Activated CD4-positive, alpha-beta T cell treated with anti-CD3 and anti-CD28 coated beads for 36 hours (primary cell): ENCODE measurements at regions of chr12 and their contacts with region 1.

Region 1: DNA sequence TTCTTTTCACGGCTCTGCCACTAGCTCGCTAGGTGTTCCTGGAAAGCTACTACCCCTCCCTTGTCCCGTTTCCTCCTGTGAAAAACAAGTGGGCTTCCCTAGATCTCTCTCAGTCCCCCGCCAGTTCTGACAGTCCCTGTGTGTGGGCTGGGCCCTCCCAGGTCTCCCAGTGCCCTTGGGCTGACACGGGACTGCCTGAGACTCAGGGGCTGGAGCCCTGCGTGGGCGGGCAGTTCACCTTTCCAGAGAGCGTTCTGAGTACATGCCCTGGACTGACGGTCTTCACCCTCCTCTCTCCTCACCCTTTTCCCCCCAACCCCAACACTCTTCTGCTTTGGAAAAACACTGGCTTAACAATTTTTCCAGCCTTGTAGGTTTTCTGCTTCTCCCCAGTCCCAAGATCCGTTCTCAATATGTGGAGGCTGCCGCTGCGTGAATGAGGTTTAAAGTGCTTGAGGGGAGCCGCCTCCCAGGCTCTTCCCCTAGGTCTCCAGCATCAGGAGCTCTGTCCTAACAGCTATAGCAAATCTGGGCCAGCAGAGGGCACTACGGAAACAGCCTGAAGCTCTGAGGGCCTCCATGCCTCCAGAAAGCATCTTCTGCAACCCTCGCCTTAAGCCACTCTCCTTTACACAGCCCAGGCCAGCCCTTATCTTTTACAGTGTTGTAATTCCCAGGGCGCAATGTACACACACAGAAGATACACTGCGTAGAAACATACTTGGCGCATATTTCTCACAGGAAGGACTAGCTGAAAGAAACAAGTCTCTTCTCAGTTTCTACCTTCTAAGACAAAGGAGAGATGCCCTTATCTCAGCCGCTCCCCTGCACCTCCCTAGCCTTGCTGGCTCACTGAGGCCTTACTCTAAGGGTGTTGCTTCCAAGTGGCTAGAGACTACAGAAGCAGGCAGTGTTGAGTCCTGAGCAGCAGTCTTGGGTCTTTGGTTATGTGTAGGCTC is 10.4 kb upstream of the DCD start:
- DNase-seq: peak; percentile 73
- ATAC-seq: peak; percentile 78
- H3K4me3 Mint-ChIP-seq: no peak overlapping the region
- H3K27ac Mint-ChIP-seq: no peak overlapping the region
- H3K4me1 Mint-ChIP-seq: no peaks in the 10 kb centered on the region
- H3K27me3 Mint-ChIP-seq: peaks cover 16% of the 10 kb centered on the region

Region 2: DNA sequence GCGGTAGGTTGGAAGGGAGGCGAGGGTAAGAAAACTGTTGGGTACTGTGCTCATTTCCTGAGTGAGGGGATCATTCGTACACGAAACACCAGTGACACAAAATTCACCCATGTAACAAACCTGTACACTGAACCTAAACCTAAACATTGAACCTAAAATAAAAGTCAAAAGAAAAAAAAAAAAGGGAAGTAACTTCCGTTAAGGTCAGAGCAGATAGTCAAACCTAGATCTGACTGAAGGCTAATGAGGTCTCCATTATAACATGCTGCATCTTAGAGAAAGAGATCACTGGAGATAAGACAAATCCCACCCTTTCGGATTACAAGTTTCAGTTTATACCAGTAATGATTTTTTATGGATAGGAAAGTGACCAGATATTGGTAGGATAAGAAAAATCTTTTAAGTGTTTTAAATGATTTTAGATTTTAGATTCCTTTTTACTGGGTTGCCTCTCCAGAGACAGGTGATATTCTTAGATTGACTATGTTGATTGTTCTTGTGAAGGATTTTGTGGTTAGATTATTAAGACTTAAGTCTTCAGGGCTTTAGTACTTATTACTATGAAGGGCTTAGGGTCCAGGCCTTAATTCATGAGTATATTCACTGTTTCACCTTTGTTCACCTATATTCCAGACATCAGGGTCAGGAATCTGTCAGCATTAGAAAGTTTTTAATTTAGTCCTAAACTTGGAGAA is 172.3 kb before region 1 on chr12:
- CTCF ChIA-PET with region 1: no interaction called
- POLR2A ChIA-PET with region 1: no interaction called
- intact Hi-C with region 1: no loop called
- DNase-seq: no peak
- ATAC-seq: no peak
- H3K4me3 Mint-ChIP-seq: no peak overlapping the region
- H3K27ac Mint-ChIP-seq: no peak overlapping the region
- H3K4me1 Mint-ChIP-seq: no peaks in the 10 kb centered on the region
- H3K27me3 Mint-ChIP-seq: peaks cover 5% of the 10 kb centered on the region

Region 3: GRCh38 chr12:54641554-54641953 is 17.0 kb before region 1 on chr12:
- CTCF ChIA-PET with region 1: interaction called, 11 read pairs
- POLR2A ChIA-PET with region 1: no interaction called
- intact Hi-C with region 1: no loop called
- DNase-seq: no peak
- ATAC-seq: no peak
- H3K4me3 Mint-ChIP-seq: no peak overlapping the region
- H3K27ac Mint-ChIP-seq: no peak overlapping the region
- H3K4me1 Mint-ChIP-seq: no peaks in the 10 kb centered on the region
- H3K27me3 Mint-ChIP-seq: peaks cover 11% of the 10 kb centered on the region

Region 4: GRCh38 chr12:54680374-54680773 is 21.8 kb after region 1 on chr12:
- CTCF ChIA-PET with region 1: interaction called, 11 read pairs
- POLR2A ChIA-PET with region 1: no interaction called
- intact Hi-C with region 1: no loop called
- DNase-seq: peak; percentile 58
- ATAC-seq: peak; percentile 76
- H3K4me3 Mint-ChIP-seq: no peak overlapping the region
- H3K27ac Mint-ChIP-seq: no peak overlapping the region
- H3K4me1 Mint-ChIP-seq: no peaks in the 10 kb centered on the region
- H3K27me3 Mint-ChIP-seq: peaks cover 26% of the 10 kb centered on the region

Region 5: DNA sequence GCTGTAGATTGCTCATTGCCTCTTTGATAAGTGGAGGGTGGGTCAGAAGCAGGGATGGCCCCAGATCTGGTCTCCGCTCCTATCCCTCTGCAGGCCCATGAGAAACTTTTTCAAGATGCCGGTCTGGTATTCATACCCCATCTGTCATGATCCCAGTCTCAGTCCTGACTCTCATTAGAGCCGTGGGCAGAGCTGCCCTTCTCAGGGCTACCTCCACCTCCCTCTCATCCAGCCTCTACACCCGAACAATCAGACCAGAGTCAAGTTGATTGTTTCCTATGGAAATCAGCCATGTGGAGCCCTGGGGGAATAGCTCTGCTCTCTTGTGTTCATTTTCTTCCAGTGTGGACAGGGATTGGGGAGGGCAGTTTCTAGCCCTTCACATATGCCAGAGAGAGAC is 406.9 kb after region 1 on chr12:
- CTCF ChIA-PET with region 1: no interaction called
- POLR2A ChIA-PET with region 1: no interaction called
- intact Hi-C with region 1: no loop called
- DNase-seq: no peak
- ATAC-seq: no peak
- H3K4me3 Mint-ChIP-seq: no peak overlapping the region
- H3K27ac Mint-ChIP-seq: no peak overlapping the region
- H3K4me1 Mint-ChIP-seq: peaks cover 5% of the 10 kb centered on the region
- H3K27me3 Mint-ChIP-seq: peaks cover 4% of the 10 kb centered on the region